Cardiac septum (tissue), 1 donor: ENCODE measurements at regions of chr12 and their contacts with region 1.

Region 1: DNA sequence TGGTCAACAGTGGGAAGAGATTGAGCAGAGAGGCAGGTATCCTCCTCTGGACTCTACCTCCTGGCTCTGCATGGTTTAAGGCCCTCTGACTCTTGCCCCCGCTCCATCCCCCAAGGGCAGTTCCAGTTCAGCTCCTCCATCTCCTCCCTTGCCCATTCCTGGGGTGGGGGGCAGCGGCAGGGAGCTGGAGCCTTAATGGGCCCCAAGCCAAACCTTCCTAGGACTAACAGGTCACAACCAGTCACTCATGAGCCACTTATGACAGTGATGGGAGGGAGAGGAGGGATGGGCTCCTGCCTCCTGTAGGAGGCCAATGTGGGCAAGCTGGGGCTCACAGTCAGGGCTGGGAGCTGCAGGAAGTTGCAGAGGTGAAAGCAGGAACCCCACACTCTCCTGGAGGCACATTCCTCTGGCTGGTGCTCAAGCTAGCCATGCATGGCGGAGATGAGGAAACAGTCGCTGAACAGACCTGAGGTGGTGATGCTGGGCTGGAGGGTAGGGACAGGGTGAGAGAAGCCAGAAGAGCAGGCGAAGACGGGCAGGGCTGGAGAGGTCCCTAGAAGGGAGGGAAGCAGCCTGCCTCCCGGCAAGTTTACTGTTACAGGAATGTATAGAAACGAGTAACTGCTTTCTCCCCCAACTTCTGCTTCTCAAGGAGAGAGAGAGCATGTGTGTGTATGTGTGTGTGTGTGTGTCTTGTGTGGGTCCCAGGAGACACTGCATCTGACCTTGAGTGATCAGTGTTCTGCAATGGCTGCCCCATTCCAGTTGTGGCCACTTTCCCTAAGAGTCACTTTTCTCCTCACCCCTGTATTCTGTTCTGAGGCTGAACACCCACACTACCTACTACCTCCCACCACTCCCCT is 5.0 kb upstream of the RAPGEF3 start:
- DNase-seq: no peak

Region 2: GRCh38 chr12:47744000-47744651 is 19.6 kb before region 1 on chr12:
- intact Hi-C with region 1: loop called (anchors 2 kb)
- DNase-seq: no peak